ENCODE measurements at regions of chr20 and their contacts with region 1.

Region 1: DNA sequence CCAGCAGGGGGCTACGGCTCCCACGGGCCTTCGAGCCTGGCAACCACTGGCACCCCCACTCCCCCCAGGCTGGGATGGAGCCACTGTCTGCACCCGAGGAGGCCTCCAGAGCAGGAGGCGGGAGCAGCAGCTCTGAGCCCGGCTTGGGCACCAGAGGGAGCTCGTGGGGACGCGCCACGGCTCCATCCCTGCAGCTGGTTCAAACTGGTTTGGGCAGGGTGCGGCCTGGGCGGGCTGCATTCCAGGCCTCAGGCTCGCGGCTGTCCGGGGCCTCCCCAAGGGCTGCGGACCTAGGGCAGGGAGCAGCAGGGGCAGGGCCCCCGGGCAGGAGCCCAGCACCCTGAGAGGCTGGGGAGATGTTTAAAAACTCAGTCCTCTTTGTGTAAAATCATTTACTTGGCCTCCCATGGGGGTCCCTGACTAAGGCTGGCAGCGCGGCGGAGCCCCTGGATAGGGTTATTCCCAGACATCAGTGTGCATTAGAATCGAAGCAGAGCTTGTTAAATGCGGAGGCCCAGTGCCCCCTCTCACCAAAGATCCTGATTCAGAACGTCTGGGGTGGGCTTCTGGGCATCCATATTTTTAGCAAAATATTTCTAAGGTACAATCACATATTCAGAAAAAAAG is 4.1 kb upstream of the BCAS4 start:
- DNase-seq: peak; percentile 88
- ATAC-seq: peak; percentile 85
- H3K4me3 ChIP-seq: peak overlapping the region; percentile 44 to 69 (median 46); a peak in 5 of 6 replicates
- H3K27ac ChIP-seq: peak overlapping the region; percentile 42
- H3K4me1 ChIP-seq: peaks cover 59% of the 10 kb centered on the region
- H3K27me3 ChIP-seq: no peaks in the 10 kb centered on the region
- CTCF ChIP-seq: peak; percentile 99
- EP300 ChIP-seq: peak; percentile 48 to 72; a peak in 2 of 4 replicates
- POLR2A ChIP-seq: peak; percentile 73 to 74
- RAD21 ChIP-seq: peak; percentile 90

Region 2: GRCh38 chr20:50625986-50626677 is 164.6 kb before region 1 on chr20:
- CTCF ChIA-PET with region 1: interaction called, 13 read pairs
- POLR2A ChIA-PET with region 1: interaction called, 8 read pairs
- in situ Hi-C with region 1: no loop called
- intact Hi-C with region 1: no loop called
- DNase-seq: peak; percentile 75
- ATAC-seq: peak; percentile 59
- H3K4me3 ChIP-seq: peak overlapping the region in 1 of 3 experiments; percentile 38; a peak in 1 of 6 replicates
- H3K27ac ChIP-seq: no peak overlapping the region
- H3K4me1 ChIP-seq: peaks cover 50% of the 10 kb centered on the region
- H3K27me3 ChIP-seq: peaks cover 2 to 34% of the 10 kb centered on the region in 2 experiments
- CTCF ChIP-seq: peak; percentile 99
- EP300 ChIP-seq: no peak
- POLR2A ChIP-seq: no peak
- RAD21 ChIP-seq: peak; percentile 88; the same call in 1 of the 2 replicates

Region 3: DNA sequence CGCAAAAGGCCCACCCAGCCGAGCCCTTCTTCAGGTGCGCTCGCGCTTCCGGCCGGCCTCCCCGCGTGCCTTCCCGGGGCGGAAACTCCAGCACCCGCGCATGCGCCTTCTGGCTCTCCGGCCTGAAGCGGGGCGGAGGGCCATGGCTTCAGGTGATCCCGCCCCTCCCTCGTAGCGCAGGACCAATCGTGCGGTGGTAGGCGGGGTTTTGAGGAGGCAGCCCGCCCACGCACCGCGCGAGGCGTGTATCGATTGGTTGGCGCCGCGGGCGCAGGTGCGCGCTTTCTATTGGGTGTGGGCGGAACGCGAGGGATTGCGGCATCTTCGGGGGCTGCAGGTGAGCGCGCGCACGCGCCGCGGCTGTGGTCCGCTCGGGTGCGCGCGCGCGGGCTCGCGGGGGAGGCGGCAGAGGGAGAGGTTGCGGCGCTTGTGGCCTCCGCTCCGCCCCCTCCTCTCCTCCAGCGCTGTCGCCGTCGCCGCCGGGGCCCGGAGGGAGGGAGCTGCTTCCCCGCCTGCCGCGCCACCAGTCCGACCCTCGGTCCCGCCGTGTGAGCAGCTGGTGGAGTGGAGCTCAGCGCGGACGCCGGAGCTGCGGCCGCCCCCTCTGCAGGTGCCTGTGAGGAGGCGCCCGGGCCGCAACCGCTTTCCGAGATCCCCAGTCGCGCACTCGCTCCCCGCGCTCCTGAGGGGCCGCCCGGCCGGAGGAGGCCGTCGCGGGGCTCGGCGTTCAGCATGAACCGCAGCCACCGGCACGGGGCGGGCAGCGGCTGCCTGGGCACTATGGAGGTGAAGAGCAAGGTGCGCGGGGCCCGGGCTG is 59.5 kb before region 1 on chr20 and contains the start of gene PARD6B:
- CTCF ChIA-PET with region 1: no interaction called
- POLR2A ChIA-PET with region 1: interaction called, 10 read pairs
- in situ Hi-C with region 1: no loop called
- intact Hi-C with region 1: loop called (anchors 1 kb)
- DNase-seq: peak; percentile 99
- ATAC-seq: peak; percentile 80
- H3K4me3 ChIP-seq: peak within 1 kb of the TSS; percentile 88 to 96 (median 95)
- H3K27ac ChIP-seq: peak within 1 kb of the TSS; percentile 89
- H3K4me1 ChIP-seq: peaks cover 81% of the 10 kb centered on the region
- H3K27me3 ChIP-seq: no peaks in the 10 kb centered on the region; a peak in 1 of 5 replicates
- CTCF ChIP-seq: peak; percentile 46
- EP300 ChIP-seq: peak in 1 of 2 experiments; percentile 20; a peak in 1 of 4 replicates
- POLR2A ChIP-seq: peak; percentile 93 to 97
- RAD21 ChIP-seq: peak; percentile 85
- total RNA-seq, gene PARD6B: 22.2 and 26.6 TPM in 2 replicates

Region 4: DNA sequence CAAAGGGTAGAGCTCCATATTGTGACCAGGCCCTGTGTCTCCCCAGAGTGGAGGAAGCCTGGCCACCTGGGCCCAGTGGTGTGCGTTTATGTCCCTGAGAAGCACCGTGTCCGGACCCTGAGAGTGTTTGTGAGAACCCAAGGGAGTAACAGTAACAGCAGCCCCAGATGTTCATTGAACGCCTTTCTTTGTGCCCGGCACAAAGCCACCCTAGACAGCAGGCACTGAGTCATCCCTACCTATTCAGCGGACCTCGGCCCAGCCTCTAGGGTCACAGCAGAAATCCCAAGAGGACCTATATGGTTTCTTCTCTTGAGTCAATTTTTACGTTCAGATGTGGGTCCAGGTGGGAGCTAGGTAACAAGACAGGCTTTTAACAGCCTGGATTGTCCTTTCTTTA is 28.6 kb after region 1 on chr20:
- CTCF ChIA-PET with region 1: interaction called, 18 read pairs
- POLR2A ChIA-PET with region 1: interaction called, 12 read pairs
- in situ Hi-C with region 1: no loop called
- intact Hi-C with region 1: no loop called
- DNase-seq: no peak
- ATAC-seq: no peak
- H3K4me3 ChIP-seq: no peak overlapping the region
- H3K27ac ChIP-seq: no peak overlapping the region
- H3K4me1 ChIP-seq: peaks cover 25% of the 10 kb centered on the region
- H3K27me3 ChIP-seq: no peaks in the 10 kb centered on the region
- CTCF ChIP-seq: no peak
- EP300 ChIP-seq: no peak
- POLR2A ChIP-seq: no peak
- RAD21 ChIP-seq: no peak

Region 5: DNA sequence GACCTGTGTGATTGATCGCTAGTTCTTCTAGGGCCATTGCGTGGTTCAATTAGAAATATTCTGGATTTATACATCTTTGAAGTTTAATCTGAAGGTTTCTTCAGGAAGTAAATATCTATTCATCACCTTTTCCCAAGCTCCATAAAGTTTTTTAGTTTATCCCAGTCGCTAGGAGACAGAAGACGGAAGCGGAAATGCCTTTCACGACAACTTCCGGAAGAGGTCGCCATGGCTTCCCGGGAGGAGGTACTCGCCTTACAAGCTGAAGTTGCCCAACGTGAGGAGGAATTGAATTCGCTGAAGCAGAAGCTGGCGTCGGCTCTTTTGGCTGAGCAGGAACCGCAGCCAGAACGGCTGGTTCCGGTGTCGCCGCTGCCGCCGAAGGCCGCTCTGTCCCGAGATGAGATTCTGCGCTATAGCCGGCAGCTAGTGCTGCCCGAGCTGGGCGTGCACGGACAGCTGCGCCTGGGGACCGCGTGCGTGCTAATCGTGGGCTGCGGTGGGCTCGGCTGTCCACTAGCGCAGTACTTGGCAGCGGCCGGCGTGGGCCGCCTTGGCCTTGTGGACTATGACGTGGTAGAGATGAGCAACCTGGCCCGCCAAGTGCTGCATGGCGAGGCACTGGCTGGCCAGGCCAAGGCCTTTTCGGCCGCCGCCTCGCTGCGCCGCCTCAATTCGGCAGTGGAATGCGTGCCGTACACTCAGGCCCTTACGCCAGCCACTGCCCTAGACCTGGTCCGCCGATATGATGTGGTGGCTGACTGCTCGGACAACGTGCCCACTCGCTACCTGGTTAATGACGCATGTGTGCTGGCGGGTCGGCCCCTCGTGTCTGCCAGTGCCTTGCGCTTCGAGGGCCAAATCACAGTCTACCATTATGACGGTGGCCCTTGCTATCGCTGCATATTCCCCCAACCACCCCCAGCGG is 168.1 kb after region 1 on chr20 and contains the start of gene MOCS3:
- CTCF ChIA-PET with region 1: no interaction called
- POLR2A ChIA-PET with region 1: interaction called, 19 read pairs
- in situ Hi-C with region 1: no loop called
- intact Hi-C with region 1: no loop called
- DNase-seq: peak; percentile 97
- ATAC-seq: peak; percentile 84
- H3K4me3 ChIP-seq: peak within 1 kb of the TSS; percentile 85 to 97 (median 97)
- H3K27ac ChIP-seq: peak within 1 kb of the TSS; percentile 86
- H3K4me1 ChIP-seq: peaks cover 44% of the 10 kb centered on the region
- H3K27me3 ChIP-seq: no peaks in the 10 kb centered on the region; a peak in 1 of 5 replicates
- CTCF ChIP-seq: peak; percentile 14; the same call in 1 of the 2 replicates
- EP300 ChIP-seq: no peak
- POLR2A ChIP-seq: peak; percentile 55 to 82
- RAD21 ChIP-seq: 0 out of 2 replicates have a peak, but pooled peaks have one; percentile 42
- total RNA-seq, gene MOCS3: 8.4 and 9.7 TPM in 2 replicates

Region 6: DNA sequence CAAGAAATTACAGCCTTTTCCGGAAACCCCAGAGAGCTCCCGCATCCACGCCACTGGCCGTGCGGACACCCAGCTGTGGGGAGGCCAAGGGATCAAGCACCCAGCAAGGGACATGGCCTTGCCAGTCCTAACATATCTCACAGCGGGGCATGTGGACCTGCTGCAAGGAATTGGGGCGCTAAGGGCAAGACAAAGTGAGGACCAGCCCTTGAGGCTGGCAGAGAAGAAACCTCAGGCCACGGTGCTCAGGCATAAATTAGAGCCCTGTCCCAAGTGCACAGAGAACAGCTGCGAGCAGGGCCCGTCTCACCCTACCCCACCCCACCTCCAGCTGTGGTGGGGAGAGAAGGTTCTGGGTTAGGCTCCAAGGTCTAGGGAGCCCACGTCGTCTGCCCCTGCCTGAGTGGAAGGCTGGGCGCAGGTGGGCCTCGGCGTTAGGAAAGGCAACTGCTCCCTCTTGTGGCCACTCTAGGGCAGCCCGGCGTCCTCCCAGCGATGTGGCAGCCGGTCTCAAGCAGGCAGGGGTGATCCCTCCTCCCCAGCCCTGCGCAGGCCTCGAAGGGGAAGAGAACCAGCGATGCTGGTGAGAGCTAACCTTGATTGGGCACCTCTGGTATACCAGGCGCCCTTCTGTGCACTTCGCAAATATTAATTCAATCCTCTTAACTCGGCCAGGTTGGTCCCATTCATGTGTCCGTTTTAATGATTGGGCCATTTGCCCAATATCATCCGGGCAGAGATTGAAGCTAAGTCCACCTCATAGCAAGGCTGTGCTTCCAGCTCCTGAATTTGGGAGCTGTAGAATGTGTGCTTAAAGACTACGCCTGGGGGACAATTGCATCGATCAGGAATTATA is 516.0 kb after region 1 on chr20:
- CTCF ChIA-PET with region 1: interaction called, 8 read pairs
- POLR2A ChIA-PET with region 1: no interaction called
- in situ Hi-C with region 1: loop called (anchors 25 kb)
- intact Hi-C with region 1: loop called (anchors 5 kb)
- DNase-seq: peak; percentile 56
- ATAC-seq: peak; percentile 99
- H3K4me3 ChIP-seq: no peak overlapping the region
- H3K27ac ChIP-seq: no peak overlapping the region
- H3K4me1 ChIP-seq: no peaks in the 10 kb centered on the region
- H3K27me3 ChIP-seq: peaks cover 0 to 29% of the 10 kb centered on the region in 2 experiments; a peak in 3 of 5 replicates
- CTCF ChIP-seq: peak; percentile 100
- EP300 ChIP-seq: no peak
- POLR2A ChIP-seq: no peak
- RAD21 ChIP-seq: peak; percentile 98

Measured in HepG2 (cell line).